Heart right ventricle (tissue), 16 donors: ENCODE measurements at regions of chr19 and their contacts with region 1.

Region 1: GRCh38 chr19:47447470-47448359 is 24.0 kb downstream of the SLC8A2 start:
- DNase-seq: peak in 1 of 2 donors; percentile 36
- ATAC-seq: peak in 6 of 8 donors; percentile 29 to 65 (median 38)
- H3K4me3 ChIP-seq: peak overlapping the region in 1 of 10 donors; percentile 22
- H3K27ac ChIP-seq: no peak overlapping the region
- H3K4me1 ChIP-seq: peaks cover 0 to 33% (median 15%) of the 10 kb centered on the region in 9 donors
- H3K27me3 ChIP-seq: peaks cover 5 to 88% (median 84%) of the 10 kb centered on the region in 7 donors
- CTCF ChIP-seq: no peak

Region 2: GRCh38 chr19:47561440-47562057 is 113.8 kb after region 1 on chr19:
- intact Hi-C with region 1: loop called in 1 of 10 experiments (anchors 10 kb)
- DNase-seq: no peak
- ATAC-seq: no peak
- H3K4me3 ChIP-seq: no peak overlapping the region
- H3K27ac ChIP-seq: no peak overlapping the region
- H3K4me1 ChIP-seq: no peaks in the 10 kb centered on the region
- H3K27me3 ChIP-seq: no peaks in the 10 kb centered on the region
- CTCF ChIP-seq: no peak